MCF 10A (cell line): ENCODE measurements at regions of chr10 and their contacts with region 1.

Region 1: GRCh38 chr10:115706026-115706781 is 566.8 kb downstream of the GFRA1 start:
- DNase-seq: peak; percentile 50
- H3K4me3 Mint-ChIP-seq: no peak overlapping the region
- H3K27ac Mint-ChIP-seq: no peak overlapping the region
- H3K4me1 Mint-ChIP-seq: peaks cover 9% of the 10 kb centered on the region
- H3K27me3 Mint-ChIP-seq: no peaks in the 10 kb centered on the region
- CTCF ChIP-seq: peak; percentile 56

Region 2: GRCh38 chr10:115355162-115355760 is 350.9 kb before region 1 on chr10:
- CTCF ChIA-PET with region 1: no interaction called
- POLR2A ChIA-PET with region 1: no interaction called
- intact Hi-C with region 1: loop called (anchors 10 kb)
- DNase-seq: peak; percentile 77
- H3K4me3 Mint-ChIP-seq: no peak overlapping the region
- H3K27ac Mint-ChIP-seq: no peak overlapping the region
- H3K4me1 Mint-ChIP-seq: no peaks in the 10 kb centered on the region
- H3K27me3 Mint-ChIP-seq: peaks cover 90% of the 10 kb centered on the region
- CTCF ChIP-seq: peak; percentile 90

Region 3: GRCh38 chr10:115432188-115432775 is 273.9 kb before region 1 on chr10:
- CTCF ChIA-PET with region 1: no interaction called
- POLR2A ChIA-PET with region 1: no interaction called
- intact Hi-C with region 1: loop called (anchors 10 kb)
- DNase-seq: peak; percentile 25
- H3K4me3 Mint-ChIP-seq: no peak overlapping the region
- H3K27ac Mint-ChIP-seq: no peak overlapping the region
- H3K4me1 Mint-ChIP-seq: no peaks in the 10 kb centered on the region
- H3K27me3 Mint-ChIP-seq: peaks cover 31% of the 10 kb centered on the region
- CTCF ChIP-seq: peak; percentile 43

Region 4: DNA sequence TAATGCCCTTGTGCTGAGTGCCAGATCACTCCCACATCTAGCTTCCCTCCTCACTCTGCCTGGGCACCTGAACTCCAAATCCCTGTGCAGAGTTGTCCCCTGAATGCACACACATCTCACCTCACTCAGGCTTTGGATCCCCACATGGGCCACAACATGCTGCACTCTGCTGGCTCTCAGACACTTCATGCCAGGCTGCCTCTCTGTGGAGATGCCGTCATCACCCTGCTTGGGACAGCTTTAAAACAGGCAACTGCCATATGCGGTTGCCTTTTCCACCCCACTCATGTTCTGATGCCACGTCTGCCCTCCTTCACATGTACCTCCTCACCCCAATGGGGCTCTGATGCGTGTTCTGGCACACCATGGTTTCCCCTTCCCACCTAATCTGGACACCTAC is 89.8 kb after region 1 on chr10:
- CTCF ChIA-PET with region 1: interaction called, 13 read pairs
- POLR2A ChIA-PET with region 1: no interaction called
- intact Hi-C with region 1: loop called (anchors 5 kb)
- DNase-seq: no peak
- H3K4me3 Mint-ChIP-seq: no peak overlapping the region
- H3K27ac Mint-ChIP-seq: no peak overlapping the region
- H3K4me1 Mint-ChIP-seq: no peaks in the 10 kb centered on the region
- H3K27me3 Mint-ChIP-seq: no peaks in the 10 kb centered on the region
- CTCF ChIP-seq: no peak

Region 5: DNA sequence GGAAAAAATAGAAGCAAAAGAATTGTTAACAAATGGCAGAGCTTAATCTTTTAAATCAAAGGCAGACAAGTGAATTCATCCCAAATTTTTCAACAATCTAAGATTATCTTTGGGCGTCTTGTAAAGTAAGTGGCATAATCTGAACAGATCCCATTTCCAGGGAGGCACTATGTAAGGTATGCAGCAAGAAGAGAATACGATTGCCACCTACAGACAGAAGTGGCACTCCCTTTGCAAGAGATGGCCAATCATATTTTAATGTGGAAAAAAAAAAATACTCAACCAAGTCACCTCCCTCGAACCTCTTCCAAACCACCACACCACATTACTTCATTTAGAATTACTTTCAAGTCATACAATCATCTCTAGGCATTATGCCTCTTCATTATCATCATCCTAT is 562.8 kb after region 1 on chr10:
- CTCF ChIA-PET with region 1: interaction called, 4 read pairs
- POLR2A ChIA-PET with region 1: no interaction called
- intact Hi-C with region 1: loop called (anchors 5 kb)
- DNase-seq: peak; percentile 26
- H3K4me3 Mint-ChIP-seq: no peak overlapping the region
- H3K27ac Mint-ChIP-seq: no peak overlapping the region
- H3K4me1 Mint-ChIP-seq: peaks cover 7% of the 10 kb centered on the region
- H3K27me3 Mint-ChIP-seq: peaks cover 10% of the 10 kb centered on the region
- CTCF ChIP-seq: peak; percentile 16

Region 6: GRCh38 chr10:116385994-116386809 is 680.0 kb after region 1 on chr10:
- CTCF ChIA-PET with region 1: interaction called, 36 read pairs
- POLR2A ChIA-PET with region 1: no interaction called
- intact Hi-C with region 1: loop called (anchors 1 kb)
- DNase-seq: peak; percentile 45
- H3K4me3 Mint-ChIP-seq: no peak overlapping the region
- H3K27ac Mint-ChIP-seq: no peak overlapping the region
- H3K4me1 Mint-ChIP-seq: no peaks in the 10 kb centered on the region
- H3K27me3 Mint-ChIP-seq: no peaks in the 10 kb centered on the region
- CTCF ChIP-seq: peak; percentile 59